ENCODE measurements at regions of chr11 and their contacts with region 1.

Region 1: DNA sequence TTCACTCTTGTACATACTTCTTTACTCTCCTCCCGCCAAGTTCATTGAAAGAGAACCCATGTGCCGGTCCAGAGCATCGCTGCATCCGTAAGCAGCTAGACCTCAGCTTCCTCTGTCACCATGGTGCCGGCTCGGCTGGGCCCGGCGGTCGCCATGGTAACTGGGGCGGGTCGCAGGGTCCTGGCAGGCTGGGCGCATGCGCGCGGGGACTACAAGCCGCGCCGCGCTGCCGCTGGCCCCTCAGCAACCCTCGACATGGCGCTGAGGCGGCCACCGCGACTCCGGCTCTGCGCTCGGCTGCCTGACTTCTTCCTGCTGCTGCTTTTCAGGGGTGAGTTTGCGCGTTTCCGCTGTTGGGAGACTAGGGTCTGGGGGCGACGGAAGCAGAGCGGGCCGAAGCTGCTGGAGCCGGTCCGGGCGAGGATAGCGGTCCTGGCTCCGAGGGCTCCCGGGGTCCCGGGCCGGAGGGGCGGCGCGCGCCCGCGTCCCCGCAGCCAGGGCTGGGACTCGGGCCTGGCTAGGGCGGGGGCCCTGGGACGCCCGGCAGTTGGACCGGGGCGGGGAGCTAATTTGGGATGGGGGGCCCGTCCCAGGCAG is at the start of gene JAM3:
- DNase-seq: peak; percentile 96
- ATAC-seq: peak; percentile 98
- total RNA-seq, gene JAM3: 22.5 TPM

Region 2: DNA sequence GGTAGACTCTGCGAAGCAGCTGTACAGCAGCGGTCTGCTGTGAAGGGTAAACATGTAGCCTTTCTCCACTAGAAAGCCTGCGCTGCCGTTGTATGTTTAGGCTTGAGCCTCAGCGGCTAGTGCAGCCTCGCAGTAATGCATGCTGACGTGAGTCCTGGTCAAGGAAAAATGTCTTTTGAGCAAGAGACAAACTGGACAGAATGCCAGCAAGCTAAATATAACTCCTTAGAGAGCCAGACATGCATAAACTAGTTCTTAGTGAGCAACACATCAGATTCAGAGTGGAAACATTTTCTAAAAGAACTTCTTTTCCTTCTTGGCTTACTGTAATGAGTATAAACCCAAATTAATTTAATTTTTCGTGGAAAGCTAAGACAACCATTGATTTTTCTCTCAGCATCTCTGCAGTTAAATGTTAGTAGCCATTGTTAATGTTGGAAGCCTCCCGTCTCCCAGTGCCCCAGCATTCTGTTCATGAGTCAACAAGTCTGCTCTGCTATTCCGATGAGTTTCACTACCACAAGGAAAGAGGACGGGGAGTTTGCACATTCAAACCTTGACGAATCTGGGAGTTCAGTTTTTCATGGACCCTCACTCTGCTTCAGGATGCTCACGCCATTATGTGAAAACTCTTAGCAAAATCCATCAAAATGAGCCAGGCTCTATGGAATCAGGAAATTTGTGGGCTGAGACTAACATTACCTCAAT is 51.4 kb after region 1 on chr11:
- intact Hi-C with region 1: loop called (anchors 2 kb)
- DNase-seq: no peak
- ATAC-seq: peak; percentile 75

Region 3: DNA sequence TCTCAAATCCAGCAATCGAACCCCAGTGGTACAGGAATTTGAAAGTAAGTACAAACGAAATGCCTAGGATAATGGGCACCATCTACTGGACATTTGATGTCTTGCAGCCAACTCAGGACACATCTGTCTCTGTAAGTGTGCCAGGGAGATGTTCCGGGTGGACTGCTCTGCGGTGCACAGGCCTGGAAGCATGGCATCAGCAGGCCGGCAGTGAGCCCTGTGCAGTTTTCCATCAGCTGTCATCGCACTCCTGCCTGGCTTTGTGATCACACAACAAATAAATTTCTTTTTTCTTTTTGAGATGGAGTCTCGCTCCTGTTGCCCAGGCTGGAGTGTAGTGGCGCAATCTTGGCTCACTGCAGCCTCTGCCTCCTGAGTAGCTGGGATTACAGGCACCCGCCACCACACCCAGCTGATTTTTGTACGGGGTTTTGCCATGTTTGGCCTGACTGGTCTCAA is 71.0 kb after region 1 on chr11:
- intact Hi-C with region 1: loop called (anchors 1 kb)
- DNase-seq: no peak
- ATAC-seq: peak; percentile 87

Measured in Right ventricle myocardium inferior (tissue), 1 donor.